K562 (cell line): ENCODE measurements at regions of chr1 and their contacts with region 1.

Region 1: DNA sequence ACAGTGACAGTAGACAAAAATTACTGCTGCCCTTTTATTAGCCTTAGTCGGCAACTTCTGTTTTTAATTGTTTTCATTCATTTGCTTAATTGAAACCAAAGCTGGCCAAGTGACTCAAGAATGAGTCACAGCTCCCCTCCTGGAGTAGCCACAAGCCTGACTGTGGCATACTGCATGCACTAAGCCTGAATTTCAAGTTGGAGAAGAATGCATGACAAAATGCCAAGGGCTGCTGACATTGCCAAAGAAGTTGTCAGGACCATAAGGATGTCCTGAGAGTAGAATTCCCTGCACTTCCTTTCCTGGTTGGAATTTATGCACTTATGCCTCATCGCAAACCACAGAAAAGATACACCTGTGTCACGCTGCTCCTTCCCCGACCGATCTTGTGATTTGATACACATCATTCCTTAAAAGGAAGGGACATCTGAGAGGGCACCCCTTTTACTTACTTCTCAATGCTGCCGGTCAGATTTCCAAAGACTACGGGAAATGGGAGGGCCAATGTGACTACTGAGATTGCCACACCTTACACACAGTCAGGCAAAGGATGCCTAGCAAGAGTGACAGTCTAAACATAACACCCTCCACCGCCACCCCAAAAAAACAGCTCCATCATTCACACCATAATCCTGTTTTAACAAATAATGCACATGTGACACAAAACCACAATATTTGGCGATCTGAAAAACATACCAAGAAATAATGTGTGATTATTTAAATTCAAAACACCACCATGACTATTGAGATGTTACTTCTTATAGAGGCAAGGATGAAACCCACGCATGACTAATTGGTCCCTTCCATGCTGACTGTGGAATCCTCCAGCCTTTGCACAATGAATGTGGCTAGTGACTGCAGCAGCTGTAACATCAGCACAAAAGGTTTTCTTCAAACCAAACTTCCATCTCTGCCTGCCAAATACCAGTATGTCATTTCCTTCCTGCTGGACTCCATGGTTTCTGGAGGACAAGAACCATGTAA is 28.2 kb downstream of the VAV3 start:
- DNase-seq: no peak
- ATAC-seq: no peak
- H3K4me3 ChIP-seq: no peak overlapping the region
- H3K27ac ChIP-seq: no peak overlapping the region
- H3K4me1 ChIP-seq: no peaks in the 10 kb centered on the region
- H3K27me3 ChIP-seq: no peaks in the 10 kb centered on the region
- CTCF ChIP-seq: no peak
- EP300 ChIP-seq: no peak
- POLR2A ChIP-seq: no peak
- RAD21 ChIP-seq: no peak

Region 2: GRCh38 chr1:107877092-107877491 is 59.7 kb before region 1 on chr1:
- CTCF ChIA-PET with region 1: no interaction called
- POLR2A ChIA-PET with region 1: no interaction called
- in situ Hi-C with region 1: no loop called
- intact Hi-C with region 1: loop called (anchors 10 kb)
- DNase-seq: no peak
- ATAC-seq: no peak
- H3K4me3 ChIP-seq: no peak overlapping the region
- H3K27ac ChIP-seq: no peak overlapping the region
- H3K4me1 ChIP-seq: no peaks in the 10 kb centered on the region
- H3K27me3 ChIP-seq: no peaks in the 10 kb centered on the region
- CTCF ChIP-seq: no peak
- EP300 ChIP-seq: no peak
- POLR2A ChIP-seq: no peak
- RAD21 ChIP-seq: no peak